GM12878 (cell line): ENCODE measurements at regions of chr7 and their contacts with region 1.

Region 1: DNA sequence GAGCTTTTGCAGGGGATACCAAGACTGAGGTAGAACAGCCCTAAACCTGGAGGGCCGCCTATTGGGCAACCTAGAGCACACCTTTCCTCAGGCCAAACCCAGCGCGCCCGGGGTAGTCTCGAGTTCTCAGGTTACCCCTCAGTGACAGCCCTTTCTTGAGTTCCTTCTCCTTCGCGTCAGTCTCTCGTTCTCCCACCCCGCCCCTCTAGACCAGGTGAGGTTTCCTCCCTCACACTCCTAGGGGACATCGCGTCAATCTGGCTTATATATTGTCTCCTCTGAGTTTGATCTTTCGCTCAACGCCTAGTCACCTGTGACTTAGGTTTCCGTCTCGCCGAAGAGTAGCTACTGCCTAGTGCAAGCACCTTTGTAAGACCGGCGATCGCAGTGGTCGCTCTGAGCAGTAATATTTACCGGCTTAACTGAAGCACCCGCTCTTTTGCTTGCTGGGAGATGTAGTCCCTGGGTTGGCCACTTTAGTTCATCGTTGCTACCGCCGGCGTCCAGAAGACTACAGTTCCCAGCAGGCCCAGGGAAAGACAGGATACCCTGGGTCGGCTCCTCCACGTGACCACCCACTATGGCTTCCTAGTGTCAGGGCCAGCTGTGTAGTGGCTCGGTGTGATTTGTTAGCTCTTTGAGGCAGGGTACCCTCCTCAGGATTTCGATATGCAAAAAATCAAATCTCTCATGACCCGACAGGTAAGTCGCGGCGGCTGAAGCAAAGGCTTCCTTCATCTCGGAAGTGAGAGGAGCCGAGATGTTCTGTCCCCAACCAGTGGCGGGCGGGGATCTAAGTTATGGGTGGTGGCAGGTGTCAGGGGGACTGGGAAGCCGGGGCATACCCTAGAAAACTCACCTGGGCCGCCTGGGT is at the start of gene VPS50:
- DNase-seq: peak; percentile 92
- ATAC-seq: peak; percentile 99
- H3K4me3 ChIP-seq: peak within 1 kb of the TSS; percentile 79
- H3K27ac ChIP-seq: peak within 1 kb of the TSS; percentile 30; the same call in 1 of the 2 replicates
- H3K4me1 ChIP-seq: 0 out of 2 replicates have a peak, but pooled peaks cover 3% of the 10 kb centered on the region
- H3K27me3 ChIP-seq: no peaks in the 10 kb centered on the region
- CTCF ChIP-seq: peak in 1 of 3 experiments; percentile 18; a peak in 1 of 6 replicates
- EP300 ChIP-seq: no peak
- POLR2A ChIP-seq: peak; percentile 73
- RAD21 ChIP-seq: no peak
- polyA plus RNA-seq, gene VPS50: 4.0 to 5.6 TPM

Region 2: GRCh38 chr7:92674127-92674778 is 557.8 kb before region 1 on chr7:
- CTCF ChIA-PET with region 1: no interaction called
- POLR2A ChIA-PET with region 1: no interaction called
- RAD21 ChIA-PET with region 1: no interaction called
- SMC1A ChIA-PET with region 1: no interaction called
- in situ Hi-C with region 1: no loop called
- intact Hi-C with region 1: no loop called
- DNase-seq: no peak
- ATAC-seq: peak; percentile 65
- H3K4me3 ChIP-seq: no peak overlapping the region
- H3K27ac ChIP-seq: peak overlapping the region; percentile 34
- H3K4me1 ChIP-seq: peaks cover 15% of the 10 kb centered on the region
- H3K27me3 ChIP-seq: no peaks in the 10 kb centered on the region
- CTCF ChIP-seq: no peak
- EP300 ChIP-seq: no peak
- POLR2A ChIP-seq: no peak
- RAD21 ChIP-seq: no peak

Region 3: GRCh38 chr7:93092757-93093370 is 139.2 kb before region 1 on chr7:
- CTCF ChIA-PET with region 1: interaction called, 70 read pairs
- POLR2A ChIA-PET with region 1: no interaction called
- RAD21 ChIA-PET with region 1: interaction called, 39 read pairs
- SMC1A ChIA-PET with region 1: interaction called, 41 read pairs
- in situ Hi-C with region 1: no loop called
- intact Hi-C with region 1: loop called (anchors 1 kb)
- DNase-seq: no peak
- ATAC-seq: peak; percentile 97
- H3K4me3 ChIP-seq: no peak overlapping the region
- H3K27ac ChIP-seq: no peak overlapping the region
- H3K4me1 ChIP-seq: no peaks in the 10 kb centered on the region
- H3K27me3 ChIP-seq: no peaks in the 10 kb centered on the region
- CTCF ChIP-seq: peak; percentile 54 to 55 (median 55)
- EP300 ChIP-seq: no peak
- POLR2A ChIP-seq: no peak
- RAD21 ChIP-seq: peak; percentile 77

Region 4: GRCh38 chr7:93147363-93147762 is 84.7 kb before region 1 on chr7:
- CTCF ChIA-PET with region 1: interaction called, 10 read pairs
- POLR2A ChIA-PET with region 1: interaction called, 3 read pairs
- RAD21 ChIA-PET with region 1: interaction called, 4 read pairs
- SMC1A ChIA-PET with region 1: interaction called, 41 read pairs
- in situ Hi-C with region 1: no loop called
- intact Hi-C with region 1: loop called (anchors 1 kb)
- DNase-seq: peak; percentile 51
- ATAC-seq: peak; percentile 90
- H3K4me3 ChIP-seq: peak overlapping the region; percentile 91
- H3K27ac ChIP-seq: peak overlapping the region; percentile 84
- H3K4me1 ChIP-seq: peaks cover 10% of the 10 kb centered on the region; the same call in 1 of the 2 replicates
- H3K27me3 ChIP-seq: no peaks in the 10 kb centered on the region
- CTCF ChIP-seq: no peak
- EP300 ChIP-seq: no peak
- POLR2A ChIP-seq: no peak
- RAD21 ChIP-seq: no peak

Region 5: DNA sequence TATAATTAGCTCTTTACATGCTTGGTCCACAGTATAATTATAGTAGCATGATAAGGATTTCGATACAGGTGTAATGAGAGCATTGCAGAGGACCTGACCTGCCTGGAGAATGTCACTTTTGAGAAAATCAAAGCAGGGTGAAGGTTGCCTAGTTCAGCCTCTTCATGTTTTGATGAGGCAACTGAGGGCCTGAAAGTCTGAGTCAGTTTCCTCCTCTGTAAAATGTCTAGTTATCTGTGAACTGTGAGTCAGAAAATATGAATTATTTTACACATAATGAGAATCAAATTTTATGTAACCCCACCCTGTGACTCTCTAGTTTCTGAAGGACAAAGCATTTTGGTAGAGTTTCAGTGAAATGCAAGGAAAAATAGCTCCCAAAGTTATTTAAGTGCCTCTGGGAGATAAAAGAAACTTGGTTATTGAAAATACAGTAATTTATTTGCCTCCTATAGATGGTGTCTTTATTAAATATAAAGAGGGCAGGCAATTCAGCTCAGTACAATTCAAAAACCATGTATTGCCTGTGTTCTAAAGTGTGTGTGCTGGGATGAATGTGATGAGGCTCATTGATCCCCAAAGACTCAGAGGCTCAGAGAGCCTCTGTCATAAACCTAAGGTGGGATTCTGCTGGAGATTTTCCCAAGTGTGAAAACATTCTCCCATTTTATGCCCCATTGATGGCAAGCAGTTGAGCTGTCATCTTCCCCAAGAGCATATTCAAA is 46.6 kb before region 1 on chr7:
- CTCF ChIA-PET with region 1: interaction called, 17 read pairs
- POLR2A ChIA-PET with region 1: no interaction called
- RAD21 ChIA-PET with region 1: no interaction called
- SMC1A ChIA-PET with region 1: interaction called, 4 read pairs
- in situ Hi-C with region 1: no loop called
- intact Hi-C with region 1: no loop called
- DNase-seq: no peak
- ATAC-seq: 0 out of 3 replicates have a peak, but pooled peaks have one; percentile 38
- H3K4me3 ChIP-seq: no peak overlapping the region
- H3K27ac ChIP-seq: no peak overlapping the region
- H3K4me1 ChIP-seq: no peaks in the 10 kb centered on the region
- H3K27me3 ChIP-seq: no peaks in the 10 kb centered on the region
- CTCF ChIP-seq: no peak
- EP300 ChIP-seq: no peak
- POLR2A ChIP-seq: no peak
- RAD21 ChIP-seq: no peak

Region 6: DNA sequence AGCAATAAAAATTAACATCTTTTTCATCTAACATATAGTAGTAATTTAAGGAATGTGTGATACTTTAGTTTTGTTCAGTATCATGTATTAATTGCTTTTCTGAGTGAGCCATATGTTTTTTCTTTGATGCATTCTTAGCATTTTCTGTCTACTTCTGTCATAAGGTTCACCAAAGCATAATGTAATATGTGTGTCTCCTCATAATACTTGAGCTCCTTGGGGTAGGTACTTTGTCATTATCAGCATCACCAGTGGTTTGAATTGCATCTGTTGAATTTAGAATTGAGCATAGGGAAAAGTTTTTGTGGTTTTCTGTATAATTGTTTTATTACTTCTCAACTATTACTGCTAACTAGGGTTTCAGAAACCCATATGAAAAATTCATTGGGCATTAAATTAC is 26.6 kb after region 1 on chr7:
- CTCF ChIA-PET with region 1: no interaction called
- POLR2A ChIA-PET with region 1: no interaction called
- RAD21 ChIA-PET with region 1: no interaction called
- SMC1A ChIA-PET with region 1: no interaction called
- in situ Hi-C with region 1: no loop called
- intact Hi-C with region 1: no loop called
- DNase-seq: no peak
- ATAC-seq: no peak
- H3K4me3 ChIP-seq: no peak overlapping the region
- H3K27ac ChIP-seq: no peak overlapping the region
- H3K4me1 ChIP-seq: no peaks in the 10 kb centered on the region
- H3K27me3 ChIP-seq: no peaks in the 10 kb centered on the region
- CTCF ChIP-seq: no peak
- EP300 ChIP-seq: no peak
- POLR2A ChIP-seq: no peak
- RAD21 ChIP-seq: no peak